Left cardiac atrium (tissue), 4 donors: ENCODE measurements at regions of chr2 and their contacts with region 1.

Region 1: DNA sequence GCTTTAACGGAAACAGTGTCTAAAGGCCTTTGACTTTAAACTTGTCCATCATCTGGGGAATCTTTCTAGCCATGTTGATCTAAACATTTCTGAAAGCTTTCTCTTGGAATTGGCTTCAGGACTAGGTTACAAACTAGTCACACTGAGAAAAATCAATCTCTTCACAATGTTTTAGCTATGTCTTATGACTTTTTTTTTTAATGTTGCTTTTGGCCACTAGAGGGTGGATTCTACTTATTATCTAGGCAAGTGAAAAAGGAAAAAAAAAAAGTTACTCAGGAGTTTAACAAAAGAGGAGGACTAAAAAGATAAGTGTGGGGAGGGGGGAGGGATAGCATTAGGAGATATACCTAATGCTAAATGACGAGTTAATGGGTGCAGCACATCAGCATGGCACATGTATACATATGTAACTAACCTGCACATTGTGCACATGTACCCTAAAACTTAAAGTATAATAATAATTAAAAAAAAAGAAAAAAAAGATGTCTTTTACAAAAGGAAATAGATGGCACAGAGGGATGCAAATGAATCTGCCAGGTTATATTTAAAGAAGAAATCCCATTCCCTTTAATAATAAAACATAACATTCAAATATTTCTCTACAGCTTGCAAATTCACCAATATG is 160.4 kb upstream of the PID1 start:
- DNase-seq: no peak
- ATAC-seq: no peak

Region 2: DNA sequence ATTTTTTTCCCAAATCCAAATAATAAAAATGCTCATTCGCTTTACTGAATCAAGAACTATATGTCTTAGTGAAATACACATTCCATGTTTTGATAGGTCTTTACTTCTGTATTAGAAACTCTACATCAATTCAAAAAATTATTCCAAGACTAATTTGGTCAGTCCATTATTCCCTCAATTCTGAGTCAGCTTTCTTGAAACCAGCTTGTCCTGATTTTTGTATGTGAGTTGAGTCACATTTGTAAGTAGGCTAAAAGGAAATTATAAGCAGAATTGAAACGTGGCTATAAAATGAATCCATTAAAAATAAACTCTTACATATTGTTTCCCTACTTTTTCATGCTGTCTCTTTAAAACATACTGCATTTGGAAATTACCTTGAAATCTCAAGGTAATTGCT is 170.0 kb after region 1 on chr2:
- intact Hi-C with region 1: no loop called
- DNase-seq: no peak
- ATAC-seq: no peak

Region 3: GRCh38 chr2:229714736-229715541 is 283.5 kb after region 1 on chr2:
- intact Hi-C with region 1: loop called in 1 of 2 experiments (anchors 10 kb)
- DNase-seq: peak; percentile 68
- ATAC-seq: peak; percentile 78 to 89

Region 4: GRCh38 chr2:230170532-230170931 is 739.1 kb after region 1 on chr2:
- intact Hi-C with region 1: no loop called
- DNase-seq: no peak
- ATAC-seq: peak; percentile 46 to 59